Naive thymus-derived CD4-positive, alpha-beta T cell (primary cell): ENCODE measurements at regions of chr16 and their contacts with region 1.

Region 1: DNA sequence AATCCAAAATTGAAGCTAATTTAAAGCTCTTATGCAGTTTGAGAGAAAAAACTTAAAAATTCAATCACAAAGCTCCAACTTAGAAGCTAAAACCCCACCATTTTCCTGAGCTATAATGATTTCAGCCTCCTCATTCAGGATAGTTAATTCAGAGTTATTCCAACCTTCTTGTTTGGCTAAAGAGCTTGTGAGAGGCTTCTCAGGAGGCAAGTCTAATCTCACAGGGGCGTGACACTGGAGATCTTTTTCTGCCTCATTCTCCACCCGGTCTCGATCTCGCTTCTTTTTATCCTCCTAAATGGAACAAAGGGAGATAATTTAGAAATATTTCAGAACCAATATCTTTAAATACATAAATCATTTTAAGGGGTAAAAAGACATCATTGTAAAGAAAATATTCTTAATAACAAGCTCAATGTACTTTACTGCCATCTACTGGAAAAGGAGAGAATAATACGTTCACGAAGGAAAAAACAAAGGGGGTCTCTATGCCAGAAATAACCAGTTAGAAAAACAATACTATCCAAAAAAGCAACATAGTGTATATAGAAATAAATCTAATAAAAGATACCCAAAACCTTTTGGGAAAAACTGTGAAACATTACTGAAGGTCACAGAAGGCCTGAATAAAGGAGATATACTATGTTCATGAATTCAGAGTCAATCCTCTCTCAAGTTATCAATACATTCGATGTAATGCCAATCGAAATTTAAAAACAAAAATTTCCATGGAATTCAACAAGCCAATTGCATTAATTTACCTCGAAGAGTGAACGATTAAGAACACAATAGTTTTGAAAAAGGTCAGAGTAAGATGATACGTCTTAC is 13.9 kb downstream of the BRD7 start:
- DNase-seq: peak in 5 of 9 donors; percentile 32 to 63 (median 51)
- ATAC-seq: peak; percentile 68
- H3K4me3 ChIP-seq: no peak overlapping the region
- H3K4me3 Mint-ChIP-seq: peak overlapping the region in 1 of 10 donors; percentile 21
- H3K27ac ChIP-seq: peak overlapping the region; percentile 31
- H3K27ac Mint-ChIP-seq: peak overlapping the region in 8 of 9 donors; percentile 2 to 91 (median 68)
- H3K4me1 ChIP-seq: no peaks in the 10 kb centered on the region
- H3K4me1 Mint-ChIP-seq: peaks cover 9 to 41% (median 25%) of the 10 kb centered on the region in 7 donors
- H3K27me3 ChIP-seq: no peaks in the 10 kb centered on the region
- H3K27me3 Mint-ChIP-seq: no peaks in the 10 kb centered on the region

Region 2: DNA sequence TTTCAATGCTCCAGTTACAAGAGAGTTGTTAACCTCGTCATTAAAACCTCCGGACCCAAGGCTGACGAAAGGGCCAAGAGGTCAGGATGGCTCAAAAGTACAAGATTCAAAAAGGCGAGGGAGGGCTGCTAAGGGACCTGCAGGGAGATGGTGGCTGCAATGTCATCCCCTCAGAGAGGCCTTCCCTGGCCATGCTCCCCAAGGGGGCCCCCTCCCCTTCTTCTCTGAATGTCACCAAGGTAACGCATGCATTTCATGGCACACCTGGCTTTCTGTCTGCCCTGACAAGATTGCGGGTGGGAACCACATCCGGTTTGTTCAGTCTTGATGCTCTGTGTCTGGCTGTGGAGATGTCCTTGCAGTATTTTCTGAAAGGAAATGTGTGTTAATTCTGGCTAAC is 891.3 kb before region 1 on chr16:
- CTCF ChIA-PET with region 1: no interaction called
- POLR2A ChIA-PET with region 1: no interaction called
- intact Hi-C with region 1: no loop called
- DNase-seq: peak; percentile 18 to 94 (median 89)
- ATAC-seq: peak; percentile 86
- H3K4me3 ChIP-seq: peak overlapping the region; percentile 15
- H3K4me3 Mint-ChIP-seq: peak overlapping the region; percentile 64 to 90 (median 79)
- H3K27ac ChIP-seq: peak overlapping the region; percentile 70
- H3K27ac Mint-ChIP-seq: peak overlapping the region; percentile 77 to 99 (median 95)
- H3K4me1 ChIP-seq: peaks cover 27 to 49% of the 10 kb centered on the region in 2 donors
- H3K4me1 Mint-ChIP-seq: peaks cover 12 to 80% (median 67%) of the 10 kb centered on the region in 7 donors
- H3K27me3 ChIP-seq: no peaks in the 10 kb centered on the region
- H3K27me3 Mint-ChIP-seq: peaks cover 0 to 17% (median 0%) of the 10 kb centered on the region in 5 donors

Region 3: DNA sequence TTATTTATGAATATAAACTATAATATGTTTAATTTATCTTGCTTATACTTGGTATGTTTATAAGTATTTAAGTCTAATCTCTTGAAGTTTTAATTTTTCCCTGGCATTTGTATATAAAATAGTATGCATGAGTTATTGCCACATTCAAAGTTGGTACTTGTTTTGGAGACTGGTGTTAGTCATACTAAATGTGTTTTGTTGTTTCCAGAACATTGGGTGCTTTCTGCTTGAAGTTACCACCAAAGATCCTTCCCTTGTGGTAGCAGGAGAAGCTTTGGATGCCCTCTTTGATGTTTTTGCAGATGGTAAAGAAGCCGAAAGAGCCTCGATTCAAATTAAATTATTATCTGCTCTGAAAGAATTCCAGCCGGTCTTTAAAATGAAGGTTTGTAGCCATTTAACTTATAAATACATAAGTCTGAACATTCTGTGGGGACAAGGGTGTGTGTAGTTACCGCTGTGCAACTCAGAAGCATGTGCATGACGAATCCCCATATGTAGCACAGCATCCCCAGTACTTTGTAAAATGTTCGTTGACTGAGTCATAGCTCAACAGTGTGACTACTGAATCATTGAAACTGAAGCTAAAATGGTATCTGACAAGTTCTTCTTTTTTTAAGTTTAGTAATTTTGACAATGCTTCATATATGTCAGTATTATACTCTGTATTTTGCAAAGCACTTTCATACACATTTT is 252.6 kb before region 1 on chr16:
- CTCF ChIA-PET with region 1: no interaction called
- POLR2A ChIA-PET with region 1: no interaction called
- intact Hi-C with region 1: no loop called
- DNase-seq: no peak
- ATAC-seq: no peak
- H3K4me3 ChIP-seq: no peak overlapping the region
- H3K4me3 Mint-ChIP-seq: no peak overlapping the region
- H3K27ac ChIP-seq: no peak overlapping the region
- H3K27ac Mint-ChIP-seq: peak overlapping the region in 1 of 9 donors; percentile 70
- H3K4me1 ChIP-seq: no peaks in the 10 kb centered on the region
- H3K4me1 Mint-ChIP-seq: peaks cover 0 to 15% (median 0%) of the 10 kb centered on the region in 7 donors
- H3K27me3 ChIP-seq: no peaks in the 10 kb centered on the region
- H3K27me3 Mint-ChIP-seq: no peaks in the 10 kb centered on the region

Region 4: DNA sequence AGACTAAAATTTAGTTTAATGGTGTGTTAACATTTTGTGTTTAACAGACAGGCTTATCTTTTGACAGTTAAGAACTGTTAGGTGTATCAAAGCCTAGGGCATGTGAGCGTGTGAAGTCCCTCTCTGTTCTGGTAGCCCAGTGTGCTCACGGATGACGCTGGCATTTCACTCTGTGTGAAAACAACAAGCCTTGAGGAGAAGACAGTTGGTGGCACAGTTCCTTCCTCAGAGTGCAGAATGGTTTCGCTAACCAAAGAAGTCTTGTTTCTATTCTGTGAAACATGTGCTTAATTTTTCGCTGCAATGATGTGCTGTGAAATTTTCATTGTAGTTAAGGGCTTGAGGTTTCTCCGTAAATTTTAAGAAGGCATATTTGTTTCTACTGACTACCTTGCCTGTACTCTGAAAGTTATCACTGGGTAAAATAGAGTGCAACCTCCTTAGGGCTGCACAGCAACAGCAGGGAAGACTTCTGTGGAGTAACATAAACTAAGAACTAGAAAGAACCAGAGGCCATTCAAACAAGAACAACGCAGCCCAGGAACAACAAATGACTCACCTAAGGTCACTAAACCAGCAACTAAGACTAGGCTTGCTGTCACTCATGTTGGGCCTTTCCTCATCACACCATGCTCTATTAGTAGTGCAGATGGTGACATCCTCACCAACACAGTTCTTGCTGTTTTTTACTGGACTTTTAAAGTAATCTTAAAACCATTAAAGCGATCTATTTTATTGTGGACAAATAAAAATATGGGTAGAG is 19.5 kb before region 1 on chr16:
- CTCF ChIA-PET with region 1: interaction called, 203 read pairs
- POLR2A ChIA-PET with region 1: interaction called, 80 read pairs
- intact Hi-C with region 1: loop called in 1 of 2 experiments (anchors 1 kb)
- DNase-seq: peak in 7 of 9 donors; percentile 32 to 88 (median 61)
- ATAC-seq: peak; percentile 87
- H3K4me3 ChIP-seq: no peak overlapping the region
- H3K4me3 Mint-ChIP-seq: peak overlapping the region in 9 of 10 donors; percentile 22 to 74 (median 58)
- H3K27ac ChIP-seq: peak overlapping the region; percentile 82
- H3K27ac Mint-ChIP-seq: peak overlapping the region; percentile 56 to 99 (median 88)
- H3K4me1 ChIP-seq: peaks cover 12 to 23% of the 10 kb centered on the region in 2 donors
- H3K4me1 Mint-ChIP-seq: peaks cover 39 to 61% (median 46%) of the 10 kb centered on the region in 7 donors
- H3K27me3 ChIP-seq: no peaks in the 10 kb centered on the region
- H3K27me3 Mint-ChIP-seq: no peaks in the 10 kb centered on the region

Region 5: GRCh38 chr16:50709053-50709684 is 354.3 kb after region 1 on chr16:
- CTCF ChIA-PET with region 1: no interaction called
- POLR2A ChIA-PET with region 1: no interaction called
- intact Hi-C with region 1: no loop called
- DNase-seq: no peak
- ATAC-seq: peak; percentile 70
- H3K4me3 ChIP-seq: no peak overlapping the region
- H3K4me3 Mint-ChIP-seq: peak overlapping the region in 7 of 10 donors; percentile 15 to 74 (median 27)
- H3K27ac ChIP-seq: no peak overlapping the region
- H3K27ac Mint-ChIP-seq: peak overlapping the region in 8 of 9 donors; percentile 6 to 77 (median 54)
- H3K4me1 ChIP-seq: peaks cover 8 to 10% of the 10 kb centered on the region in 2 donors
- H3K4me1 Mint-ChIP-seq: peaks cover 22 to 40% (median 31%) of the 10 kb centered on the region in 7 donors
- H3K27me3 ChIP-seq: no peaks in the 10 kb centered on the region
- H3K27me3 Mint-ChIP-seq: no peaks in the 10 kb centered on the region